ENCODE measurements at regions of chr5 and their contacts with region 1.

Region 1: DNA sequence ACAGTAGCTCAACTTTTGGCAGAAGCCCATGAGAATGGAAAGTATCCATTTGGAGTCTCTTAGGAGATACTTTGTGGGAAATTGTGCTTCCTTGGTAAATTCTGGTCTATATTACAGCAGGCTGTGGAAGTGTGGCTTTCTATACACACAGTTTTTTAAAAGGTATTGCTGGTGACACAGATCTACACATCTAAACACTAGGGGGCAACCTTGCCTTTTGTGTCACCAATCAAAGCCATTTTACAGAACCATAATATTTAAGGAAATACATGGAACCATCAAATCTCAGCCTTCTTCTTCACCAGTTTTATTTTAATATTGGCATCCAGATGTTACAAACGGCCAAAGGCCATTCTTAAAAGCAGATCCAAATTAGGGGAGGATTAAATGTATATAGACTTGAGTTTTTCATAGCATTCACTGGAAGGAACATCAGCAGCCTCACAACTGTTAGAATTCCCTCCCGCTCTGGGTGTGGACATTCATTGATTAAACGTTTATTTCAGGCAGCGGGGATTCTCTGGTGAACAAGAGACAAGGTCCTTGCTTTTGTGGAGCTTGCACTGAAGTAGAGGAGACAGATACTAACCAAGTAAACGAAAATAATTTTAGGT is 132.4 kb upstream of the EPB41L4A start:
- DNase-seq: no peak
- ATAC-seq: peak; percentile 77

Region 2: DNA sequence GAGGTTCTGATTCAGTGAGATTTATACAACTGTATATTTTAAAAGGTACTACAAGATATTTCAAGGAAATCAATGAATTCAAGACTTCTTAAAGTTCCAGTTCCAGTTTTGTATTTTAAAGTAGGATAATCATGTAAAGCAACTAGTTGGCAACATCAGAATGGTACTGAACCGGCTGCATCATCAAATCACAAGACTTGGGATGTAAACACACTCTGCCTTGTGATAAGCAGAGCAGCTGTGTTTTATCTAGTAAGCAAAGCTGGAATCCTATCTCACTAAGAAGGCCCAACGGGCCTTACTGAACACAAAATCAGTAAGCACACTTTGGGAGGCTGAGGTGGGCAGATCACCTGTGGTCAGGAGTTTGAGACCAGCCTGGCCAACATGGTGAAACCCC is 467.4 kb before region 1 on chr5:
- intact Hi-C with region 1: no loop called
- DNase-seq: no peak
- ATAC-seq: no peak

Region 3: DNA sequence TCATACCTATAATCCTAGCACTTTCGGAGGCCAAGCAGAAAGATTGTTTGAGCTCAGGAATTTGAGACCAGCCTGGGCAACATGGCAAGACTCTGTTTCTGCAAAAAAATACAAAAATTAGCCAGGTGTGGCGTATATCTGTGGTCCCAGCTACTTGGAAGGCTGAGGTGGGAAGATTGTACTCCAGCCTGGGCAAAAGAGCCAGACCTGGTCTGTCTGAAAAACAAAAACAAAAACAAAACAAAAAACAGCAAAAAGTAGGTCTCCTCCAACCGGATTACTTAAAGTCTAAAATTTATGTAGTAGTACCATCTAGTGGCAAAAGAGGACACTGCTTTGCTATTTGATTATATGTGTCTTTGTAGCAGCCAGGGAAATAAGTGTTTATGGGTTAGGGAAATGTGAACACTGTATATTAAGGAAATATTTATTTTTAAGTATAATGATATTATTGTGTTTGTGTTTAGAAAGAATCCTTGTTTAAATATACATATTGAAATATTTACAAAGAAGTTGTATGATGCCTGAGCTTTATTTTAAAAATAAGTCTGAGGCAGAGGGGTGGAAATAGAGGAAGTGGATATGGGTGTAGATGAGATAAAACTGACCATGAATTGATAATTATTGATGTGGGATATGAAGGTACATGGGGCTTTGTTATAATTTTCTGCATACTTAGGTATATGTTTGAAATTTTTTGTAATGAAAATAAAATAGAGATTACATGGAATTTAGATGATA is 206.1 kb after region 1 on chr5:
- intact Hi-C with region 1: loop called (anchors 2 kb)
- DNase-seq: no peak
- ATAC-seq: peak; percentile 86

Region 4: DNA sequence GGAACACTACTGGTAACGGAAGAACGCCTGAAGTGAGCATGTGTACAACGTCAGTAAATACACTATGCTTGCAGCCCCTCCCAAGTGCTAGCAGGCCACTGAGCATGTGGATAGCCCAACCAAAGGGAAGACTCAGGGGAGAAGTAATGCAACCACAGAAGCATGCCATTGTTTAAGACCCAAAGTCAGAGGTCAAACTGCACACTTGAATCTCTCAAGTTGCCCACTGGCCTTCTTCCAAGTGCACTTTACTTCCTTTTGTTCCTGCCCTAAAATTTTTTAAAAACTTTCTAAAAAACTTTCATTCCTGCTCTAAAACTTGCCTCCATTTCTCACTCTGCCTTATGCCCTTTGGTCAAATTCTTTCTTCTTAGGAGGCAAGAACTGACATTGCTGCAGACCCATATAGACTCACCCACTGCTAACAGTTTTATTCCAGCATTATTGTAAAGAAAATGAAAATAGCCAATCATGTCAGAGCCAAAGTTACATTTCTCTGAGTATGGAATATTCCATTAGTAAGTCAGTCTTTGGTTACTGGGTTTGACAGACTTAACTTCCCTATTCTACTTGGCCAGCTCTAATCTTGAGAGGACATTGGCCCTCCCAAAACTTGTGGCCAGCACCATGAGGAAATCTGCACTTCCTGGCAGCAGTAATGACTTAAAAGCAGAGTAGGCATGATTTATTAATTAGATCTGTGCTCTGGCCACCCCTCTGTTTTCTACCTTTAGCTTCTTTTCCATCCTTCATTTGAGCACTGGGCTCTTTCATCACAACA is 806.4 kb after region 1 on chr5:
- intact Hi-C with region 1: no loop called
- DNase-seq: no peak
- ATAC-seq: peak; percentile 46

Measured in sciatic nerve (tissue), 2 donors.